MCF 10A (cell line): ENCODE measurements at regions of chr1 and their contacts with region 1.

Region 1: DNA sequence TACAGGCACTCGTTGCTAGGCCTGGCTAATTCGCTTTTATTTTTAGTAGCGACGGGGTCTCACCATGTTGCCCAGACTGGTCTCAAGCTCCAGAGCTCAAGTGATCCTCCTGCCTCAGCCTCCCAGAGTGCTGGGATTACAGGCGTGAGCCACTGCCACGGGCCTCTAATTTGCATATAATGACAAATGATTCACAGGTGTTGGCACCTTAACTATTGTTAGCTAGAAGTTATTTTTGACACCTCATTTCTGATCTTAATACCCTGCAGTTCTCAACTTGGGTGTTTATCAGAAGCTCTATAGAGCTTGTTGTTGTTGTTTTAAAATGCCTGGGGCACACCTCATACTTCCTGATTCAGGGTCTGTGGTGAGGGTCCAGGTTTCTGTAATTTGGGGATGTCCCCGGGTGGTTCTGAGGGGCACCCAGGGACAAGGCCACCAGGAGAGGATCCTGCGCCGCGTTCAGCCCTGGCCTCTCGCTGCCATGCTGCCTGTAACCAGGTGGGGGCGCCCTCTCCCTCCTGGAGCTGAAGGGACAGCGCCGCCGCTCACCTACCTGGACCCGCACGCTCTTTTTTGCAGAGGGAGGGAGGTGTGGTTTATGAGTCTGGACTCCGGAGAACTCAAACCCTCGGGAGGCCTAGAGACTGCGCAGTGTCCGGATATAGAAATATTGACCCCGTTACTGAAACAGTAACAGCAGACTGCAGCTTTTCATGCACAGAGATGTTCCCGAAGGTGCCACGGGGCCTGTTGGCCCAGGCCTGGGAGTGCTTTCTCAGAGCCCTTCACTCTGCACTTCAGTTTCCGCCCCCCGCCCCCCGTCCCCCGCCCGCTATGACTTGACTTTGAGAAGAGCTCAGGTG is 23.0 kb upstream of the NEK2 start:
- DNase-seq: peak; percentile 93
- H3K4me3 Mint-ChIP-seq: no peak overlapping the region
- H3K27ac Mint-ChIP-seq: no peak overlapping the region
- H3K4me1 Mint-ChIP-seq: no peaks in the 10 kb centered on the region
- H3K27me3 Mint-ChIP-seq: no peaks in the 10 kb centered on the region
- CTCF ChIP-seq: peak; percentile 100

Region 2: GRCh38 chr1:211675230-211676105 is 22.9 kb before region 1 on chr1 and contains the start of gene NEK2:
- CTCF ChIA-PET with region 1: interaction called, 174 read pairs
- POLR2A ChIA-PET with region 1: interaction called, 6 read pairs
- intact Hi-C with region 1: no loop called
- DNase-seq: peak; percentile 100
- H3K4me3 Mint-ChIP-seq: peak within 1 kb of the TSS; percentile 92
- H3K27ac Mint-ChIP-seq: peak within 1 kb of the TSS; percentile 91
- H3K4me1 Mint-ChIP-seq: peaks cover 26% of the 10 kb centered on the region
- H3K27me3 Mint-ChIP-seq: no peaks in the 10 kb centered on the region
- CTCF ChIP-seq: no peak
- total RNA-seq, gene NEK2: 33.4 and 44.5 TPM in 2 replicates

Region 3: GRCh38 chr1:211735208-211736170 is 37.1 kb after region 1 on chr1:
- CTCF ChIA-PET with region 1: interaction called, 55 read pairs
- POLR2A ChIA-PET with region 1: interaction called, 5 read pairs
- intact Hi-C with region 1: no loop called
- DNase-seq: peak; percentile 100
- H3K4me3 Mint-ChIP-seq: peak overlapping the region; percentile 35
- H3K27ac Mint-ChIP-seq: peak overlapping the region; percentile 70
- H3K4me1 Mint-ChIP-seq: peaks cover 25% of the 10 kb centered on the region
- H3K27me3 Mint-ChIP-seq: no peaks in the 10 kb centered on the region
- CTCF ChIP-seq: no peak

Region 4: DNA sequence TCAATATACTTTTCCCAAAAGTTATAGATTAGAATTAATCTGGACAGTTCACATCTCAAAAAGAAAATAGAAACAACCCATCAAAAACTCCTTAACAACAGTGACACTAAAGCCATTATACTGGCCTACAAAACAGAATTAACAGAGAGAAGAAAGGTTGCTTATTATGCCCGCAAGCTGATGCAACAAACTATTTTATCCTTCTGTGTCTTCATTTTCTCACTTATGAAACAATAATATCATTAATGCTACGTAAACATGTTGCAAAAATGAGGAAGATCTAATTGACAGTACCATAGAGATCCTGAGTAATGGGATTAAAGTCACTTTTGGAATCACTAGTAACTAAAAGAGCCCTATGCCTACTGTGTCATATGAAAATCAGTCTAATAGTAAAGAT is 99.6 kb after region 1 on chr1:
- CTCF ChIA-PET with region 1: interaction called, 15 read pairs
- POLR2A ChIA-PET with region 1: no interaction called
- intact Hi-C with region 1: no loop called
- DNase-seq: no peak
- H3K4me3 Mint-ChIP-seq: no peak overlapping the region
- H3K27ac Mint-ChIP-seq: no peak overlapping the region
- H3K4me1 Mint-ChIP-seq: peaks cover 10% of the 10 kb centered on the region
- H3K27me3 Mint-ChIP-seq: no peaks in the 10 kb centered on the region
- CTCF ChIP-seq: no peak

Region 5: DNA sequence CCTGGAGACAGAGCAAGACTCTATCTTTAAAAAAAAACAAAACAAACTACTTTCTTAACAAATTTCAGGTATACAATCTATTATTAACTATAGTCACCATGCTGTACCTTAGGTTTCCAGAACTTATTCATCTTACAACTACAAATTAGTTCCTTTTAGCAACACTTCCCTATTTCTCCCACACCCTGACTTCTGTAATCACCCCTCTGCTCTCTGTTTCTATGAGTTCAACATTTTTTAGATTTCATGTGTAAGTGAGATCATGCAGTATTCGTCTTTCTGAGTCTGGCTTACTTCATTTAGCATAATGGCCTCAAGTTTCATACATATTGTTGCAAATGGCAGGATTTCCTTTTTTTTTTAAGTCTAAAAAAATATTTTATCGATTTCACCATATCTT is 210.1 kb after region 1 on chr1:
- CTCF ChIA-PET with region 1: interaction called, 16 read pairs
- POLR2A ChIA-PET with region 1: no interaction called
- intact Hi-C with region 1: no loop called
- DNase-seq: no peak
- H3K4me3 Mint-ChIP-seq: no peak overlapping the region
- H3K27ac Mint-ChIP-seq: no peak overlapping the region
- H3K4me1 Mint-ChIP-seq: peaks cover 7% of the 10 kb centered on the region
- H3K27me3 Mint-ChIP-seq: peaks cover 15% of the 10 kb centered on the region
- CTCF ChIP-seq: no peak

Region 6: DNA sequence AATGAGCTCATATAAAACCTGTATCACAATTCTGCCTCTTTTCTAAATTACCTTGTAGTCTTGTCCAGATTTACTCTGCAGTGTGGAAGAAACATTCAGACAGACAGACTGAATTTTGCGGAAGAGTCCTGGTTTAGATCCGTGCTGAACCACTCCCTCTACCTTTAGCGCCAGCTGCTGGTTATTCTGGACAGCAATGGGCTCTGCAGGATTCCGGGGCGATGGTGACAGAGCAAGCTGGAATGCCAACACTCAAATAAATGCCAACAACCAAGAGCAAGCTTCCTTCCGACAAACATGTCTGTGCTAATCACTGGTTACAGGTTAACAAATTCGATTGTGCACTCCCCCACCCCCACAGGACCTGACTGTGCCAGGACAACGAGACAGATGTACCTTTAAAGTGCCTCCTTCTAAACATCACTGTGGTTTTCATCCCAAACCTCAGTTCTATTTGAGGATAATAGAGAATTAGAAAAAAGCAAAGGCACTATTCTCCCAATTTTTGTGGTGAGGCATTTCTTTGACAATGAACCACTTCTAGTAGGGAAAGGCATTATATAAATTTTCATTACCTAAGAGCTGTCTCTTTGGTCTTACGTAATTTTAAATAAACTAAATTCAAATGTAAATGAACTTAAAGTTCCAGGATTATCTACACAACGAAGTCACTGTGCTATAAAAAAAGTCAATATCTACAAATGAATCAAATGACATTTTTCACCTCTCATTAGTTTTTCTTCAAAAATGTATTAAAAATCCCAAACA is 246.5 kb after region 1 on chr1:
- CTCF ChIA-PET with region 1: interaction called, 116 read pairs
- POLR2A ChIA-PET with region 1: interaction called, 19 read pairs
- intact Hi-C with region 1: loop called (anchors 1 kb)
- DNase-seq: peak; percentile 96
- H3K4me3 Mint-ChIP-seq: peak overlapping the region; percentile 3
- H3K27ac Mint-ChIP-seq: peak overlapping the region; percentile 21
- H3K4me1 Mint-ChIP-seq: peaks cover 14% of the 10 kb centered on the region
- H3K27me3 Mint-ChIP-seq: no peaks in the 10 kb centered on the region
- CTCF ChIP-seq: peak; percentile 96

Region 7: GRCh38 chr1:212002536-212002935 is 304.1 kb after region 1 on chr1:
- CTCF ChIA-PET with region 1: interaction called, 22 read pairs
- POLR2A ChIA-PET with region 1: no interaction called
- intact Hi-C with region 1: no loop called
- DNase-seq: no peak
- H3K4me3 Mint-ChIP-seq: no peak overlapping the region
- H3K27ac Mint-ChIP-seq: no peak overlapping the region
- H3K4me1 Mint-ChIP-seq: no peaks in the 10 kb centered on the region
- H3K27me3 Mint-ChIP-seq: no peaks in the 10 kb centered on the region
- CTCF ChIP-seq: no peak